ENCODE measurements at regions of chr20 and their contacts with region 1.

Region 1: GRCh38 chr20:38674092-38674764 is 50.1 kb upstream of the SLC32A1 start:
- DNase-seq: peak; percentile 64
- H3K4me3 ChIP-seq: peak overlapping the region; percentile 43 to 60 (median 56)
- H3K27ac ChIP-seq: peak overlapping the region; percentile 41
- H3K4me1 ChIP-seq: peaks cover 11% of the 10 kb centered on the region
- H3K27me3 ChIP-seq: no peaks in the 10 kb centered on the region
- CTCF ChIP-seq: no peak
- POLR2A ChIP-seq: peak; percentile 26

Region 2: DNA sequence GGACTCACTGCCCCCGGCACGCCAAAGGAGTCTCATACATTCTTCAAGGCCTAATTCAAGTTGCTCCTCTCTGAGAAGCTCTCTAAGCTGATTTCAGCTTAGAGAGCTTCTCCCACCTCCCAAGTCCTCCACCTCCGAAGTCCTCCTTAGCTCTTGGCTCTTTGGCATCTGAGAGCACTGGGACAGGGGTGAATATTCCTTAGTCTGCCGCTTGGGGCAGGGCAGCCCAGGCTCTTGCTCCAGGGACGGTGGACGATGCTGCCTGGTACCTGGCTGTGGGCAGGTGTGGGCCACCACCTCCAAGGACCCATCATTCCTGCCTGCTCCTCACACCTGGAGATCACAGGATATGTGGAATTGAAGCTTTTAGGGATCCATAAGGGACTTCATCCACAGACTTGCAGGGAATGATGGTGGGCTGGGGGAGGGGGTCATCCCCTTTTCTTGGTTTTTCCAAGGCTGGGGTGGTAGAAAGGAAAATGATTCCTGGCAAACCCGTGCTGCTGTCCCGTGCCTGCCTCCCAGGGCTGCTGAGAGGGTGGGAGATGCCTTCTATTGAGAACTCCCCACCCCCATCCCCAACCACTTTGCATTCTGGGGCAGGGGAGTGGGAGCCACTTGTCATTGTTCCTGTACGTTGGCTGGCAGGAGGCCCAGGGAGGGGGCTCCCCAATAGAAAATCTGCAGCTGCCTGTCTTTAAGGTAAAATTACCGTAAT is 15.2 kb before region 1 on chr20:
- CTCF ChIA-PET with region 1: interaction called, 15 read pairs
- POLR2A ChIA-PET with region 1: no interaction called
- dilution Hi-C with region 1: no loop called
- intact Hi-C with region 1: no loop called
- DNase-seq: peak; percentile 16
- H3K4me3 ChIP-seq: no peak overlapping the region
- H3K27ac ChIP-seq: no peak overlapping the region
- H3K4me1 ChIP-seq: no peaks in the 10 kb centered on the region
- H3K27me3 ChIP-seq: peaks cover 4 to 8% of the 10 kb centered on the region in 2 experiments
- CTCF ChIP-seq: peak; percentile 52 to 69
- POLR2A ChIP-seq: no peak

Region 3: DNA sequence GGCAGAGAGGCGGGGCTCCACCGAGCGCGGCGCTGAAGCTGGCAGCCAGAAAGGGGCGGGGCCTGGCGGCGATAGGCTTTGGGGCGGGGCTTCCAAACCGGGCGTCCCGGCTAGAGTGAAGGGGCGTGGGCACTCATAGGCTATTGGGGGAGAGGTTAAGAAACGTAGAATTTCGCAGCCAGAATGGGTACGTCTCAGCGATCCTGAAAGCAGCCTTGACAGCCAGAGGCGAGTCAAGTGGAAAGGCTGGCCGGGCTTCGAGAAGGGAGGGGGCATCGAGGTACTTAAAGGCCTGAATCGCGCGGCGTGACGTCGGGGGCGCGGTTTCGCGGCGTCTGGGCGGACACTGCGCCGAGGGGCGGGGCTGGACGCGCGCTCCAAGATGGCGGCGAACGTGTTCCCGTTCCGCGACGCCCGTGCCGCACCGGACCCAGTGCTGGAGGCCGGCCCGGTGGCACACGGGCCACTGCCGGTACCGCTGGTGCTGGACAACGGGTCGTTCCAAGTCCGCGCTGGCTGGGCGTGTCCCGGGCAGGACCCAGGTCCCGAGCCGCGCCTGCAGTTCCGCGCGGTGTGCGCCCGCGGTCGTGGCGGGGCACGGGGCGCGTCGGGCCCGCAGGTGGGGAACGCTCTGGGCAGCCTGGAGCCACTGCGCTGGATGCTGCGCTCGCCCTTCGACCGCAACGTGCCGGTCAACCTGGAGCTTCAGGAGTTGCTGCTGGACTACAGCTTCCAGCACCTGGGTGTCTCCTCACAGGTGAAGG is 74.1 kb after region 1 on chr20 and contains the start of gene ACTR5:
- CTCF ChIA-PET with region 1: no interaction called
- POLR2A ChIA-PET with region 1: no interaction called
- dilution Hi-C with region 1: no loop called
- intact Hi-C with region 1: loop called (anchors 1 kb)
- DNase-seq: peak; percentile 94
- H3K4me3 ChIP-seq: peak within 1 kb of the TSS; percentile 26 to 86 (median 77)
- H3K27ac ChIP-seq: peak within 1 kb of the TSS; percentile 46
- H3K4me1 ChIP-seq: peaks cover 6% of the 10 kb centered on the region
- H3K27me3 ChIP-seq: no peaks in the 10 kb centered on the region
- CTCF ChIP-seq: no peak
- POLR2A ChIP-seq: peak; percentile 80
- total RNA-seq, gene ACTR5: 9.7 and 11.3 TPM in 2 replicates

Measured in endothelial cell of umbilical vein (primary cell).